WTC11 (cell line): ENCODE measurements at regions of chr6 and their contacts with region 1.

Region 1: DNA sequence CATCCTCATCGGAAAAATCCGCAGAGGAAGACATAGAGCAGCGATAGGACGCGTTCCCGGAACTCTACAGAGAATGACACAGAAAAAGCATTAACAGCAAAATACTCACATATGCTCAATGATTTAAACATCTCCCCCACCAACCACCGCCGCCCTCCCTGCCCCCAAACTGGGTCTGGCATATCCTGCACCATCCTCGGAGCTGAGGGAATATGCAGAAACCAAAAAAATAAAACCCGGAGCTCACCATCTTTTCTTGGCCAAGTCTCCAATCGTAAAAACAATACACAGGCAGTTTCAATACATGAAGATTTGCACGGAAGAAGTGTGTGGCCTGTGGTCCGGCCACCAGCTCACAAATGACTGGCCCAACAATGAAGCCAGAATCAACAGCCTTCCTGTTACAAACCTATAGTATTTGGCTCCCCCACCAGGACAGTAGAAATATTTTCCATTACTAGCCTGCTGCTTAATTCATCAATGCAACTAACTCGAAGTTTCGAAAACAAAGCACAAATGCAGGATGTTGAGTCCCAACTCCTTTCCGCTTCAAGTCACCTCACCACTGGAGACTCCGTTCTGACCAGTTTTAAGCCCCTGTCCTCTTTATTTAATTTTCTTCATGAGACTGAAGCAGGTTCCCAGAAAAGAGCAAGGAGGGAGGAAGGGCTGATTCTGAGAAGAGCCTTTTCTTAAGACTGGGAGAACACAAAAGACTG is 103.2 kb upstream of the BEND6 start:
- DNase-seq: peak; percentile 19
- ATAC-seq: peak; percentile 76
- H3K4me3 Mint-ChIP-seq: peak overlapping the region; percentile 94
- H3K27ac Mint-ChIP-seq: peak overlapping the region; percentile 96
- H3K4me1 Mint-ChIP-seq: peaks cover 50% of the 10 kb centered on the region
- H3K27me3 Mint-ChIP-seq: no peaks in the 10 kb centered on the region; the same call in 1 of the 2 replicates
- CTCF ChIP-seq: peak; percentile 25; the same call in 1 of the 2 replicates

Region 2: GRCh38 chr6:56484669-56485068 is 367.0 kb before region 1 on chr6:
- CTCF ChIA-PET with region 1: no interaction called
- POLR2A ChIA-PET with region 1: no interaction called
- DNase-seq: no peak
- ATAC-seq: no peak
- H3K4me3 Mint-ChIP-seq: no peak overlapping the region
- H3K27ac Mint-ChIP-seq: no peak overlapping the region
- H3K4me1 Mint-ChIP-seq: no peaks in the 10 kb centered on the region
- H3K27me3 Mint-ChIP-seq: no peaks in the 10 kb centered on the region
- CTCF ChIP-seq: no peak

Region 3: GRCh38 chr6:56637640-56638039 is 214.1 kb before region 1 on chr6:
- CTCF ChIA-PET with region 1: interaction called, 26 read pairs
- POLR2A ChIA-PET with region 1: no interaction called
- DNase-seq: no peak
- ATAC-seq: no peak; the same call in 1 of the 2 replicates
- H3K4me3 Mint-ChIP-seq: no peak overlapping the region
- H3K27ac Mint-ChIP-seq: no peak overlapping the region
- H3K4me1 Mint-ChIP-seq: no peaks in the 10 kb centered on the region
- H3K27me3 Mint-ChIP-seq: no peaks in the 10 kb centered on the region
- CTCF ChIP-seq: peak; percentile 36; the same call in 1 of the 2 replicates

Region 4: GRCh38 chr6:56708810-56709597 is 142.7 kb before region 1 on chr6:
- CTCF ChIA-PET with region 1: interaction called, 66 read pairs
- POLR2A ChIA-PET with region 1: no interaction called
- DNase-seq: no peak
- ATAC-seq: no peak
- H3K4me3 Mint-ChIP-seq: no peak overlapping the region
- H3K27ac Mint-ChIP-seq: no peak overlapping the region
- H3K4me1 Mint-ChIP-seq: peaks cover 32% of the 10 kb centered on the region
- H3K27me3 Mint-ChIP-seq: no peaks in the 10 kb centered on the region
- CTCF ChIP-seq: peak; percentile 41

Region 5: DNA sequence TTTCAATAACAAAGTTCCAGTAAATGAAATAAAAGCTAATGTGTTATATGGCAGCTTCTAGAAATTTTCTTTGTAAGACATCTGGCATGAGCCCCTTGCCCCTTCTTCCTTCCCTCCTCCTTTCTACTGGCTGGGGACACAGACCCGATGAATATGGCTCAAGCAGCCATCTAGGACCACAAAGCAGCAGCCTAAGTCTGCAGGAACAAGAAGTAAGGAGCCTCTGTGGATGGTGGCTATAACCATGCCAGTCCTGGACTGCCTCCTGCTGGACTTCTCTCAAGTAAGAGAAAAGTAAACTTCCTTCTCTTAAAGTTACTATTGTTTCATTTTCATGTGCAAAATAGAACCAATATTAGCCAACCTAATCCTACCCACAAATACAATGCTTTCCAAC is 94.1 kb before region 1 on chr6:
- CTCF ChIA-PET with region 1: interaction called, 14 read pairs
- POLR2A ChIA-PET with region 1: no interaction called
- DNase-seq: no peak
- ATAC-seq: peak; percentile 74
- H3K4me3 Mint-ChIP-seq: no peak overlapping the region
- H3K27ac Mint-ChIP-seq: peak overlapping the region; percentile 15; the same call in 1 of the 2 replicates
- H3K4me1 Mint-ChIP-seq: peaks cover 75% of the 10 kb centered on the region
- H3K27me3 Mint-ChIP-seq: no peaks in the 10 kb centered on the region
- CTCF ChIP-seq: no peak

Region 6: DNA sequence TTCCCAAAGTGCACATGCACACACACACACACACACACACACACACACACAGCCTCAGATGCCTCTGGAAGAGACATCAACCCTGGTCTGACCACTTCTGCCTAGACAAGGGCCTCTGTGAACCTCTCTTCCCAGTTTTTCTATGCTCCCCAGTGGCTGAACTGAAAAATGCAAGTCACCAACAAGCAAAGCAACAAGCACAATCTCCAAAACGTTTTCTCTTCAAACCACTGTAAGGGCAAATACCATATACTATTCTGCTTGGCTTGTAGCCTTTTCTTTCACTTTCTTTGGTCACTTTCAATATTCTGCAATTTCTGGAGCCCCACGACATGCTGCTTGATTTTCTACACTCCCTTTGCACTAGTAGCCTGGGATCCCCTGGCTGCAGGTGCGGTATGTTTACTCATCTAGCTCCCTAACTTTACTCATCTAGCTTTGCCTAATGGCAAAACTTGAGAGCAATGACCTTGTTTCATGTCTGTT is 87.6 kb before region 1 on chr6:
- CTCF ChIA-PET with region 1: interaction called, 14 read pairs
- POLR2A ChIA-PET with region 1: no interaction called
- DNase-seq: no peak
- ATAC-seq: peak; percentile 80
- H3K4me3 Mint-ChIP-seq: no peak overlapping the region
- H3K27ac Mint-ChIP-seq: peak overlapping the region; percentile 91
- H3K4me1 Mint-ChIP-seq: peaks cover 60% of the 10 kb centered on the region
- H3K27me3 Mint-ChIP-seq: no peaks in the 10 kb centered on the region
- CTCF ChIP-seq: 0 out of 2 replicates have a peak, but pooled peaks have one; percentile 17

Region 7: GRCh38 chr6:57029188-57029587 is 177.5 kb after region 1 on chr6:
- CTCF ChIA-PET with region 1: no interaction called
- POLR2A ChIA-PET with region 1: no interaction called
- DNase-seq: no peak
- ATAC-seq: no peak
- H3K4me3 Mint-ChIP-seq: no peak overlapping the region
- H3K27ac Mint-ChIP-seq: 0 out of 2 replicates have a peak overlapping the region, but pooled peaks have one; percentile 21
- H3K4me1 Mint-ChIP-seq: peaks cover 44% of the 10 kb centered on the region
- H3K27me3 Mint-ChIP-seq: peaks cover 20% of the 10 kb centered on the region
- CTCF ChIP-seq: no peak